Adrenal gland (tissue), 19 donors: ENCODE measurements at regions of chr3 and their contacts with region 1.

Region 1: DNA sequence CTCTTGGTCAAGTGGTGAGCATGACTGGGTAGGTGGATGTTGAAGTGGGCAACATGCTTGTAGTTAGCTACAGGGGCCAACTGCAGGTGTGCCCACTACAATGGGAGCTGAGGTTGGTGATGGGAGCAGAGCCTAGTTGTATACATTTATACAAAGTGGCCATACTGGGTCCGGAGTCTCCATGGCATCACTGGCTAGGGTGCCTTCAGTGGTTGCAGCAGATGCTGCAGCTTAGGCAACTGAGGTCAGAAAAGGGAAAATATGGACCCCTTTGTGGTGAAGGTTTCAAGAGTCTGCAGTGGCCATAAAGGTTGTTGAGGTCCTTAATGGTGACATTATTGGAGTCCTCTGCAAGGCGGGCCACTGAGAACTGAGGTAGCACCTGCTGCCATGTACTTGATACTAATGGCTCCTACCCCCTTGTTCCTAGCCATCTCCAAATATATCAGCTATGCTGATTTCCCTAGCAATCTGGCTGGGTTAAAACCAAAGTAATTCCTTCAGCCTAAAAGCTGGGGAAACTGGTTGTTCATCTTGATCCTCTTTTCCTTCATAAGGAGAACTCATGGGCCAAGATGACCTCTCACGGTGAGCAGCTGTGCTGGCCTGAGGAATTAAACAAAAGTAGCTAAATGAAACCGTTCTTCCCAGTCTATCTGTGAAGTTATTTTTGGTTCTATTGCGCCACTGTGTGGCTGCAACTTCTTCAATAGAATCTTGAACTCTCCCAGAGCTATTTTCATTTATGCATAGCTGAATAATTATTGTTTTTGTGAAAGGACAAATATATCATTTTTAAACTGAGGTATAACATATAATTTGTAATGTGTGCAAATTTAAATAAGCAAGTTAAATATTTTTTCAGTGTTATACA is 76.0 kb upstream of the PLSCR4 start:
- DNase-seq: peak; percentile 39 to 78 (median 53)
- H3K4me3 ChIP-seq: no peak overlapping the region
- H3K27ac ChIP-seq: no peak overlapping the region
- H3K4me1 ChIP-seq: no peaks in the 10 kb centered on the region
- H3K27me3 ChIP-seq: no peaks in the 10 kb centered on the region
- CTCF ChIP-seq: peak; percentile 17 to 85 (median 70)
- POLR2A ChIP-seq: no peak

Region 2: GRCh38 chr3:146065573-146066006 is 261.3 kb before region 1 on chr3:
- intact Hi-C with region 1: loop called in 1 of 2 experiments (anchors 5 kb)
- DNase-seq: peak in 4 of 7 donors; percentile 16 to 51 (median 42)
- H3K4me3 ChIP-seq: no peak overlapping the region
- H3K27ac ChIP-seq: no peak overlapping the region
- H3K4me1 ChIP-seq: peaks cover 0 to 4% of the 10 kb centered on the region in 2 donors
- H3K27me3 ChIP-seq: no peaks in the 10 kb centered on the region
- CTCF ChIP-seq: peak; percentile 60 to 84 (median 70)
- POLR2A ChIP-seq: no peak

Region 3: GRCh38 chr3:146189519-146190173 is 137.3 kb before region 1 on chr3:
- intact Hi-C with region 1: loop called in 1 of 2 experiments (anchors 5 kb)
- DNase-seq: peak; percentile 21 to 65 (median 24)
- H3K4me3 ChIP-seq: no peak overlapping the region
- H3K27ac ChIP-seq: no peak overlapping the region
- H3K4me1 ChIP-seq: no peaks in the 10 kb centered on the region
- H3K27me3 ChIP-seq: no peaks in the 10 kb centered on the region
- CTCF ChIP-seq: peak; percentile 73 to 82 (median 75)
- POLR2A ChIP-seq: no peak

Region 4: GRCh38 chr3:146218880-146219866 is 107.7 kb before region 1 on chr3:
- intact Hi-C with region 1: loop called (anchors 5 to 10 kb)
- DNase-seq: peak in 5 of 7 donors; percentile 31 to 69 (median 50)
- H3K4me3 ChIP-seq: no peak overlapping the region
- H3K27ac ChIP-seq: no peak overlapping the region
- H3K4me1 ChIP-seq: peaks cover 16 to 55% of the 10 kb centered on the region in 2 donors
- H3K27me3 ChIP-seq: no peaks in the 10 kb centered on the region
- CTCF ChIP-seq: peak; percentile 63 to 87 (median 71)
- POLR2A ChIP-seq: no peak